ENCODE measurements at regions of chr22 and their contacts with region 1.

Region 1: DNA sequence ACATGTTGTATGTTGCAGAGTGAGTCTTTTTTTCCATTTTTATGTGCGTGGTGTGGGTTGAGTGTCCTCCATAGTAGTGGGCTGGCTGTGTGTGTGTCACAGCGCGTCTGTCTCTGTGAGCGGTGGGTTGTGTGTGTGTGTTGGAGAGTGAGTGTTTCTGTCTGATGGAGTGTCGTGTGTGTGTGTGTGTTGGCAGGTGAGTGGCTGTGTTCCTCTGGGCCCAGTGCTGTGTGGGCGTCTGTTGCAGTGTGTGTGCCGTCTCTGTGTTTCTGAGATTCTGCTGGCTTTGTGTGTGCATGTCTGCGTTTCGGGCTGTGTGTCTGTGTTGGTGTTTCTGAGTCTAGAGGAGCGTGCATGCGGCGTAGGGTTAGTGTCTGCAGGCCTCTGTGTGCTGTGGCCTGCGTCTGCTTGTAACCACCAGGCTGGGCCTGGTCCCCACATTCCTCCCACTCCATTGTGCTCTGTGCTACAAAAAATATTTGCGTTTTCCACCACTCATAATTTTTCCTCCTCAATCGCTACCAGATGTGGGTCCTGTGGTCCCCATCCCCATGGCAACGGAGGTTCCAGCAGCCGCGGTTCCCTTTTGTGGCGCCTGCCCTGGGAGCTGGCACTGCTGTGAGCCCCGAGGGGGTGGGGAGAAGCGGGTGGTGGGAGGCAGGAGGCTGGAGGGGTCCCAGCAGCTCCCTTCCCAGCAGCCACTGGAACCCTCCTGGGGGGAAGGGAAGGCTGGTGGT is 15.2 kb downstream of the SCARF2 start:
- DNase-seq: peak in 1 of 2 donors; percentile 83
- H3K4me3 ChIP-seq: no peak overlapping the region
- H3K27ac ChIP-seq: peak overlapping the region in 1 of 5 donors; percentile 47
- H3K4me1 ChIP-seq: peaks cover 27 to 47% (median 41%) of the 10 kb centered on the region in 4 donors
- H3K27me3 ChIP-seq: peaks cover 0 to 40% (median 27%) of the 10 kb centered on the region in 3 donors
- CTCF ChIP-seq: no peak
- EP300 ChIP-seq: no peak
- POLR2A ChIP-seq: no peak

Region 2: GRCh38 chr22:20116951-20117645 is 305.3 kb before region 1 on chr22 and contains the start of gene TRMT2A:
- intact Hi-C with region 1: no loop called
- DNase-seq: peak; percentile 99
- H3K4me3 ChIP-seq: peak within 1 kb of the TSS; percentile 63 to 99 (median 84)
- H3K27ac ChIP-seq: peak within 1 kb of the TSS; percentile 83 to 94 (median 89)
- H3K4me1 ChIP-seq: peaks cover 27 to 73% (median 66%) of the 10 kb centered on the region in 4 donors
- H3K27me3 ChIP-seq: no peaks in the 10 kb centered on the region
- CTCF ChIP-seq: peak in 1 of 7 experiments; percentile 18
- EP300 ChIP-seq: no peak
- POLR2A ChIP-seq: no peak
- total RNA-seq, gene TRMT2A: 30.5 to 143 (median 89.5) TPM

Region 3: DNA sequence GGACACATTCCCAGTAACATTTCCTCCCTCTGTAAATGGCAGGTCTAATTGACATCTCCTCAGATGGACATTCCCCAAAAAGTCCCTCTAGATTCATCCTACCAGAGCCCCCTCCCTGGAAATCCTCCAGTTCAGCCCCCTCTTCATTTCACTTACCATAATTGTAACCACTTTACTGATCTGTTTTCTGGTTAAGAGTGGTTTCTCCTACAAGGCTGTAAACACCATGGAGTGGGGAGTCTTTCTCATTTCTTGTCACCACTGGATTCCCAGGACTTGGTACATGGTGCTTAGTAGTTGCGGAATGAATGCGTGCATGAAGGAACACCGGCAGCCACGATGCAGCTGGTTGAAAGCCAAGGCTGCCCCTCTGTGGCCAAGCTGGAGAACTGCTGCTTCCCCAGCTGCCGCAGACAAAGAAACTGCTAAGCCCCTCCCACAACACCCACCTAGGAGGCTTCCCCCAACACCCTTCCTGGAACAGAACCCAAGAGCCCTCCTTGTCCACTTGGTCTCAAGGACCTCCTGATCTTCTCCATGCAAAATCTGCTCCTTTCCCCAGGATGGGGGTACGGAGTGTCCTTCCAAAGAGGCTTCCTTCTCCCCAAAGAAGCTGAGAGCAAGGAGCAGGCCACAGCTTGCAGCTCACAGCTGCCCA is 33.8 kb after region 1 on chr22:
- intact Hi-C with region 1: loop called (anchors 5 kb)
- DNase-seq: peak; percentile 78 to 94
- H3K4me3 ChIP-seq: no peak overlapping the region
- H3K27ac ChIP-seq: no peak overlapping the region
- H3K4me1 ChIP-seq: peaks cover 0 to 15% (median 4%) of the 10 kb centered on the region in 4 donors
- H3K27me3 ChIP-seq: no peaks in the 10 kb centered on the region
- CTCF ChIP-seq: peak in 5 of 7 experiments; percentile 73 to 93 (median 88)
- EP300 ChIP-seq: no peak
- POLR2A ChIP-seq: no peak

Region 4: DNA sequence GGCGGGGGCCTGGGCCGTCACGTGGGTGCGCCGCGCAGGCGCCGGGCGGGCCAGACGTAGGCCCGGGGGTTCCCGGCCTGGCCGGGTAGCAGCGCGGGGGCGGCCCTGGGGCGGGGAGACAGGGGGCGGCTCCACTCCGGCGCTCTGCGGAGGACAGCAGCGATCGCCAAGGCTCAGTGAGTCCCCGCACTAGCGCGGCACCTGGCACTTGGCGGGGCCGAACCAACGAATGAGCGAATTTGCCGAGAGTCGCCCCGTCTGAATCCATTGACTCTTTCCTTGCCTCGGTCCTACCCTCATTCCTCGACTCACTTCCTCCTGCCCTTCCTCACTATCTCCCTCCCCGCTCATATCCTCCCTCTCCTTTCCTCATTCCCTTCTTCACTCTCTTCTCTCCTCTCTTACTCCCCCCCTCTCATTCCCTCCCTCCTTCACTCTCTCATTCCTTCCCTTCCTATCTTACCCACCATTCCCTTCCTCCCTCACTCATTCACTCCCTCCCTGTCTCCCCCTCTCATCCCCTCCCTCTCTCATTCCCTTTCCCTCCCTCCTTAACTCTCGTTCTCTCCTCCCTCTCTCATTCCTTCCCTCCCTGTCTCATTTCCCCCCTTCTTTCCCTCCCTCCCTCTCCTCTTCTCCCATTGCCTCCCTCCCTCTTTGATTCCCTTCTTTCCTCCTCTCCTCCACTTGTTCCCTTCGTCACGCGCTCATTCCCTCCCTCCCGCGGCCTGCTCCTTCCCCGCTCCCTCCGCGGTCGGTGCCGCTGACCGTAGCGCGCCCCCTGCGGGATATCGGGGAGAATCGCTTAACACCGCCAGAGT is 73.6 kb after region 1 on chr22:
- intact Hi-C with region 1: loop called (anchors 5 kb)
- DNase-seq: peak; percentile 94 to 98
- H3K4me3 ChIP-seq: peak overlapping the region; percentile 67 to 77 (median 76)
- H3K27ac ChIP-seq: peak overlapping the region; percentile 92 to 96 (median 94)
- H3K4me1 ChIP-seq: peaks cover 15 to 35% (median 24%) of the 10 kb centered on the region in 4 donors
- H3K27me3 ChIP-seq: no peaks in the 10 kb centered on the region
- CTCF ChIP-seq: peak in 5 of 7 experiments; percentile 83 to 95 (median 84)
- EP300 ChIP-seq: no peak
- POLR2A ChIP-seq: peak in 1 of 4 donors; percentile 9

Measured in stomach (tissue), 19 donors.